ENCODE measurements at regions of chr4 and their contacts with region 1.

Region 1: GRCh38 chr4:184282251-184282713 is 64.6 kb upstream of the ENPP6 start:
- DNase-seq: peak; percentile 50
- CTCF ChIP-seq: peak; percentile 39

Region 2: DNA sequence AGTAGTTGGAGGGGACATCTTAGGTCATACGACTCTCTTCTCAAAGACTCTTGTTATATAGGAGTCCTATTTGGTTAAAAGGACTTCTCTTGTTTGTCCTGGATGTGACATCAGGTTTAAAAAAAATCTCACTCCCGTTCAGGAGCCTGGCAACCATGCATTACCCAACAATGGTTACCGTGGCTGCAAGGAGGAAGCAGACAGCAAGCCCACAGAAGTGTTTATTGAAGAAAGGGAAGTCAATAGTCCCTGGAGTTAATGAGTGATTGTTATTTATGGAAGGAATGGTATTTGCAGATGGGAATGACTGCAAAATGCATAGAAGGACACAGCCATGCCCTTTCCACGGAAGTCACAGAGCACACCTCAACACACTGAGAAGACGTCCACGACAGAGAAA is 11.3 kb after region 1 on chr4:
- CTCF ChIA-PET with region 1: interaction called, 12 read pairs
- POLR2A ChIA-PET with region 1: interaction called, 3 read pairs
- DNase-seq: no peak
- CTCF ChIP-seq: no peak

Region 3: DNA sequence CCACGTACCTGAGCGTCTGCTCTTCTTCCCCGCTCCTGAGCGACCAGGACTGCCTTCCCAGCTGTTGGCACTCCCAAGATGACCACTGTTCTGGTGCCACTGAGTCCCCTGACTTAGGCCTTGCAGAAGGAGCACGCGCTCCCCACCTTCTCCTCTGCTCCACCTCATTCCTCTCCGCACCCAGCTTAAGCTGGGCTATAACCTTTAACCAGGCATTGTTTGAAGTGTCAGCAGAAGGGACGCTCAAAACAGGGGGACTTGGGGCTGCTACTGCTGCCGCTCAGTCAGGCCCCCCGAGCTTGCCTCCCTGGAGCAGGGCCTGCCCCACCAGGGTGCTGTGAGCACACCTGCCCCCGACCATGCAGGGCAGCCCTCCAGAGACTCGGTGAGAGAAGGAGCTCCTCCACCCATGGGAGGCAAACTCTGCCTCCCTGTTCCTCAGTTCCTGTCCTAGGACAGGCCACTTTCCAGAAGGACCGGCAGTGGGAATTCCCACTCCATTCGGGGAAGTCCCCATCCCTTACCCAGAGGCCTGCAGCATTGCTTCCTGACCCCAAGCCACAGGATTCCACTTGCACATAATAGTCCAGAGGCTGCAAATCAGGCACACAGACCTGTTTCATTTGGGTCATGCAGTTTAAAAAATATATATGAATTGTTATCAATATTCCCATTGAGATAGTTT is 35.1 kb after region 1 on chr4:
- CTCF ChIA-PET with region 1: interaction called, 11 read pairs
- POLR2A ChIA-PET with region 1: no interaction called
- DNase-seq: no peak
- CTCF ChIP-seq: no peak

Region 4: GRCh38 chr4:184361443-184361842 is 79.2 kb after region 1 on chr4:
- CTCF ChIA-PET with region 1: no interaction called
- POLR2A ChIA-PET with region 1: interaction called, 10 read pairs
- DNase-seq: no peak
- CTCF ChIP-seq: no peak

Measured in GM10248 (cell line).